Sigmoid colon (tissue), 7 donors: ENCODE measurements at regions of chr13 and their contacts with region 1.

Region 1: GRCh38 chr13:98482476-98483444 is 94.1 kb downstream of the STK24 start:
- DNase-seq: peak; percentile 94
- H3K4me3 ChIP-seq: no peak overlapping the region
- H3K27ac ChIP-seq: peak overlapping the region; percentile 73 to 88 (median 81)
- H3K4me1 ChIP-seq: peaks cover 0 to 100% (median 96%) of the 10 kb centered on the region in 4 donors
- H3K27me3 ChIP-seq: no peaks in the 10 kb centered on the region
- CTCF ChIP-seq: no peak
- EP300 ChIP-seq: peak; percentile 69 to 96 (median 88)
- POLR2A ChIP-seq: no peak

Region 2: DNA sequence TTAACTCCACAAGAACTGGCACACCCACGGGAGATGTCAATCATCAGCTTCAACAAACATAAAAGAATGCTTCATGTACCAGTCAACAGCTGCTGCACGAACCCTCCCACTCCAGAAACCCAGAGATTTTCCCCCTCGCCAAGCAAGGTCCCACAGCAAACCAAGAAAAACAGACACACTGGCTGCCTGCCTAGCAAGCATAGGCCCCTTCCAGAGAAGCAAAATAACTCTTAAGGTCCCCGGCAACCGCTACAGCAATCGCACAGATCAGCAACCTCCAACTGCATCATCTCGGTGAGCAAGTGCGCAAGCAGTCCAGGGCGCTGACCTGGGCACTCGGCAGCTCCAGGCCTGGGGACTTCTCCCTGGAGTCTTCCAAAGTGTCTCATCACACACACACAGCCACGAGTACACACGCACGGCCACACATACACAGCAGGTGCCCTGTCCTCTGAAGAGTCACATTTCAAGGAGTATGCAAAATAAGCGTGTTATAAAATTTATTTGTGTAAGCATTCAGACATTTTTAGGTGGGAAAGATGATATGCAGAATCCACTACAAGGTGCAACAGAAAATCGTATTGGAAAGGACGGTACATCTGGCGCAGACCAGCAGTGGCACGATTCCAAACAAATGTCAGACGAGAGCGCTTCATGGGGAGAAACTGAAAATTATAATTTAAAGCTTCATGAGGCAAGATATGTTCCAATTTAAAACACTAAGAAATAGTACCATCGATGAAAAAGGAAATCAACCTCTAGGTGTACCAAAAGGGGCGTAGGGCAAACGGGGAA is 30.9 kb before region 1 on chr13:
- intact Hi-C with region 1: loop called (anchors 2 kb)
- DNase-seq: peak; percentile 92
- H3K4me3 ChIP-seq: no peak overlapping the region
- H3K27ac ChIP-seq: peak overlapping the region; percentile 64 to 87 (median 80)
- H3K4me1 ChIP-seq: peaks cover 0 to 60% (median 48%) of the 10 kb centered on the region in 4 donors
- H3K27me3 ChIP-seq: no peaks in the 10 kb centered on the region
- CTCF ChIP-seq: no peak
- EP300 ChIP-seq: peak in 3 of 4 donors; percentile 49 to 90 (median 53)
- POLR2A ChIP-seq: no peak